Astrocyte of the spinal cord (primary cell): ENCODE measurements at regions of chr16 and their contacts with region 1.

Region 1: GRCh38 chr16:67719048-67719777 is at the start of gene GFOD2:
- DNase-seq: peak; percentile 94
- H3K4me3 ChIP-seq: peak within 1 kb of the TSS; percentile 86
- CTCF ChIP-seq: no peak

Region 2: DNA sequence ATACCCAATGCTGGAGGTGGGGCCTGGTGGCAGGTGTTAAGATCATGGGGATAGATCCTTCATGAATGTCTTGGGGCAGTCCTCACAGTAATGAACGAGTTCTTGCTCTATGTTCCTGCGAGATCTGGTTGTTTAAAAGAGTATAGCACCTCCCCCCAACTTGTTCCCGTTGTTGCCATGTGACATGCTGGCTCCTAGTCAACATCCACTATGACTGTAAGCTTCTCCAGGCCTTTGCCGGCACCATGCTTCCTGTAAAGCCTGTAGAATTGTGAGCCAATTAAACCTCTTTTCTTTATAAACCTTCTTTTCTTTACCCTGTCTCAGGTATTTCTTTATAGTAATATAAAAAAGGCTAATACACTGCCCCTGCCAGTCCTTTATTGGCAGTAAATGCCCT is 53.9 kb after region 1 on chr16:
- in situ Hi-C with region 1: loop called (anchors 10 kb)
- DNase-seq: no peak
- H3K4me3 ChIP-seq: no peak overlapping the region
- CTCF ChIP-seq: no peak